ENCODE measurements at regions of chr3 and their contacts with region 1.

Region 1: DNA sequence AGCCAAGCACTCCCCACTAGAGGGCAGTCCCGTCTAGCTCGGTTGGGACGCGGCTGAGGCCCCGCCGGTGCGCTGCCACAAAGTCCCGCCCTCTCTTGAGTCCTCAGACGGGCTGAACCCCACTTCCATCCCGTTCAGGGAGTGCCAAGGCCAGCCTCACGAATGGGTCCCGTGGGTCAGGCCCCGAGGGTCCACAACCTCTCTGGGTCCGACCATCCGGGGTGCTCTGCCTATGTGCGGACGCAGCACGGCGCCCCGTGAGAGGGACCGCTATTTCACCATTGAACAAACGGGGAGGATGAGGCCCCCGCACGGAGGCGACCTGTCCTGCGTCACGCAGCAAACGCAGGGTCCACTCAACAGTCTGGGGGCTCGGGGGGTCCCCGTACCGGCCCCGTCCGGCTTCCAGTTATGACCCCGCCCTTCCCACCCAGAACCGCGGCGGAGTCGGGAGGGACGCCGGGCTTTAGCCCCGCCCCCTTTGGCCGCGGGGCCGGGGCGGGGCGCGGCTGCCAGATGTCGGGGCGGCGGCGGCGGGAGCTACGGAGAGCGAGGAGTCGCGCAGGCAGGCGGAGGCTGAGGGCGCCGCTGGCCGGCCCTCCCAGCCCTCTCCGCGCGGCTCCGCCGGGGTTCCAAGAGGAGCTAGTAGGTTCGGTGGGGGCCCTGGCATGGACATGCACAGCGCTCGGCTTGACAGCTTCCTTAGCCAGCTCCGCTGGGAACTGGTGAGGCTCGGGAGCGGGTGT is at the start of gene INKA1:
- DNase-seq: peak; percentile 92
- ATAC-seq: peak; percentile 79
- H3K4me3 Mint-ChIP-seq: peak within 1 kb of the TSS; percentile 86
- H3K27ac Mint-ChIP-seq: peak within 1 kb of the TSS; percentile 94
- H3K4me1 Mint-ChIP-seq: peaks cover 41% of the 10 kb centered on the region
- H3K27me3 Mint-ChIP-seq: peaks cover 40% of the 10 kb centered on the region
- CTCF ChIP-seq: peak; percentile 58
- total RNA-seq, gene INKA1: 1.4 to 2.0 TPM (median 1.5 TPM) in 3 replicates

Region 2: DNA sequence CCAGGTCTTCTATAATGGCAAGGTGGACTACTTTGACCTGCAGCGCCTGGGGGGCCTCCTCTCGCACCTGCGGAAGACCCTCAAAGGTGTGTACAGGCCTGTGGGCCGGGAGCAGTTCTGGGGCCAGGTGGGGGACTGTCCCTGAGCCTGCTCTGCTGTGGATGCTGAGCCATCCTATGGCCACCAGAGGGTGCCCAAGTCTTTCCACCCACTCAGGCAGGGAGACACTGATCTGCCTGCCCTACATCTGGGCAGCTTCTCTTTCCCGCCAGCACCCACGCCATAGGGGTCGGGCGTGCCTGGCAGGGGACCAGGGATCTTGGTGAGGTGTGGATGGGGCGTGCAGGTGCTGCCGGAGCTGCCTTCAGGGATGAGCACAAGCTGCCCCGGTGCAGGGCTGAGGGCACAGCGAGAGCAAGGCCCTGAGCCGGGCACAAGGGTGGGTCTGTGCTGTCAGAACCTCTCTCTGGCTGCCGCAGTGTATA is 99.4 kb before region 1 on chr3:
- CTCF ChIA-PET with region 1: interaction called, 29 read pairs
- POLR2A ChIA-PET with region 1: no interaction called
- DNase-seq: peak; percentile 75
- ATAC-seq: peak; percentile 91
- H3K4me3 Mint-ChIP-seq: no peak overlapping the region
- H3K27ac Mint-ChIP-seq: no peak overlapping the region; the same call in 1 of the 2 replicates
- H3K4me1 Mint-ChIP-seq: peaks cover 16% of the 10 kb centered on the region
- H3K27me3 Mint-ChIP-seq: no peaks in the 10 kb centered on the region
- CTCF ChIP-seq: peak; percentile 70

Region 3: GRCh38 chr3:49786241-49786958 is 16.5 kb before region 1 on chr3 and contains the start of gene IP6K1:
- CTCF ChIA-PET with region 1: interaction called, 36 read pairs
- POLR2A ChIA-PET with region 1: interaction called, 8 read pairs
- DNase-seq: peak; percentile 100
- ATAC-seq: peak; percentile 99
- H3K4me3 Mint-ChIP-seq: peak within 1 kb of the TSS; percentile 90
- H3K27ac Mint-ChIP-seq: peak within 1 kb of the TSS; percentile 93
- H3K4me1 Mint-ChIP-seq: peaks cover 20% of the 10 kb centered on the region
- H3K27me3 Mint-ChIP-seq: peaks cover 15% of the 10 kb centered on the region
- CTCF ChIP-seq: no peak
- total RNA-seq, gene IP6K1: 29.2 to 32.2 TPM (median 32.2 TPM) in 3 replicates

Region 4: DNA sequence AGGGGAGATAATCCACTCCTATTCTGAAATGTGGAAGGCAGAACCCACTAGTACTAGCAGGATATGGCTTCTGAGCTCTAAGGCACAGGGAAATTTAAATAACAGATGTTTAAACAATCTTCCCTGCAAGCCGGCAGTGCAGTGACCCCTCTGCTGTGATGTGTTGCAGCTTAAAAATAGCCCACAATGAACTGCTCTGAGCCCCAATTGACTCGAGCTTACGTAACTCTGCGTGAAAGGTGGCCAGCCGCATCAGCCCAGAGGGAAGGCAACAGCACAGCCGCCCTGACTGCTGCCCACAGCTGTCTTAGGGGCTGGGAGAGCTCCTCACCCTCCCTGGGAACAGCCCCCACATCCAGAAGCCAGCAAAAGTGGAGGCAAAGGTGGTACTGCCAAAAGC is 79.3 kb after region 1 on chr3:
- CTCF ChIA-PET with region 1: interaction called, 26 read pairs
- POLR2A ChIA-PET with region 1: no interaction called
- DNase-seq: no peak
- ATAC-seq: no peak
- H3K4me3 Mint-ChIP-seq: no peak overlapping the region
- H3K27ac Mint-ChIP-seq: no peak overlapping the region; the same call in 1 of the 2 replicates
- H3K4me1 Mint-ChIP-seq: peaks cover 29% of the 10 kb centered on the region
- H3K27me3 Mint-ChIP-seq: no peaks in the 10 kb centered on the region
- CTCF ChIP-seq: no peak

Region 5: GRCh38 chr3:49906004-49906743 is 103.3 kb after region 1 on chr3:
- CTCF ChIA-PET with region 1: interaction called, 115 read pairs
- POLR2A ChIA-PET with region 1: interaction called, 3 read pairs
- DNase-seq: peak; percentile 68
- ATAC-seq: peak; percentile 14
- H3K4me3 Mint-ChIP-seq: peak overlapping the region; percentile 32
- H3K27ac Mint-ChIP-seq: peak overlapping the region; percentile 73
- H3K4me1 Mint-ChIP-seq: peaks cover 47% of the 10 kb centered on the region
- H3K27me3 Mint-ChIP-seq: peaks cover 11% of the 10 kb centered on the region
- CTCF ChIP-seq: peak; percentile 36

Measured in WTC11 (cell line).